GM12878 (cell line): ENCODE measurements at regions of chr6 and their contacts with region 1.

Region 1: DNA sequence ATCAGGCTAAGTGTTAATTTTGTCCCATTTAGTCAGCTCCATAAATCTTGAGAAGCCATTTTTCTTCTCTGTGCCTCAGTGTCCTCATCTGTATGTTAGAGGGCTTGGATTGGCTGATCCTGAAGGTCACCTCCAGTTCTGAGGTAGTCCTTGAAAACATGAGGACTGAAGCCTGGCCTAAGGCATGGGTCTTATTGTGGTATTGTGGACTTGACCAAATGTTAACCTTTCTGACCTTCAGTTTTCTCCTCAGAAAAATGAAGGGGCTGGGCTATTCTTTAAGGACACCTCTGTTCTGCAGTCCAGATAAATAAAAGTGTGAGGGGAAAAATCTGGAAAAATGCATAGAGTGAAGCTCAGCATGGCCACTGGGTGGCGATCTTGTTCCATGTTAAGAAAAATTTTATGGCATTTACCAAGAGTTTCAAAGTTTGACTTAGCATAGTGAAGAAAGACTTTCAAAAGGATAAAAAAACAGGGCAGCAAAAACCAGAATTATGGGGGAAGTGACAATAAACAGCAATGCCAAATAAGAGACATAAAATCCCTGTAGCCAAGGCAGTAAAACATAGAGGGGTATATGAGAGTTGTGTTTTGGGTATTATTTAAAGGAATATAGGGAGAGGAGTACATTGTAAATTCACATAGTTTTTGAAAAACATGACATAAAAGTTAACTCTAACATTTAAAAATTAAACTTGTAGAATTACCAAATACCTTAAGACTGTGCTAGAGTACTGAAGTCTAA is 13.2 kb upstream of the TFB1M start:
- DNase-seq: no peak
- ATAC-seq: peak; percentile 85
- H3K4me3 ChIP-seq: no peak overlapping the region
- H3K27ac ChIP-seq: no peak overlapping the region
- H3K4me1 ChIP-seq: no peaks in the 10 kb centered on the region; the same call in 1 of the 2 replicates
- H3K27me3 ChIP-seq: no peaks in the 10 kb centered on the region
- CTCF ChIP-seq: peak; percentile 64 to 84 (median 71)
- EP300 ChIP-seq: no peak
- POLR2A ChIP-seq: no peak
- RAD21 ChIP-seq: peak; percentile 98

Region 2: DNA sequence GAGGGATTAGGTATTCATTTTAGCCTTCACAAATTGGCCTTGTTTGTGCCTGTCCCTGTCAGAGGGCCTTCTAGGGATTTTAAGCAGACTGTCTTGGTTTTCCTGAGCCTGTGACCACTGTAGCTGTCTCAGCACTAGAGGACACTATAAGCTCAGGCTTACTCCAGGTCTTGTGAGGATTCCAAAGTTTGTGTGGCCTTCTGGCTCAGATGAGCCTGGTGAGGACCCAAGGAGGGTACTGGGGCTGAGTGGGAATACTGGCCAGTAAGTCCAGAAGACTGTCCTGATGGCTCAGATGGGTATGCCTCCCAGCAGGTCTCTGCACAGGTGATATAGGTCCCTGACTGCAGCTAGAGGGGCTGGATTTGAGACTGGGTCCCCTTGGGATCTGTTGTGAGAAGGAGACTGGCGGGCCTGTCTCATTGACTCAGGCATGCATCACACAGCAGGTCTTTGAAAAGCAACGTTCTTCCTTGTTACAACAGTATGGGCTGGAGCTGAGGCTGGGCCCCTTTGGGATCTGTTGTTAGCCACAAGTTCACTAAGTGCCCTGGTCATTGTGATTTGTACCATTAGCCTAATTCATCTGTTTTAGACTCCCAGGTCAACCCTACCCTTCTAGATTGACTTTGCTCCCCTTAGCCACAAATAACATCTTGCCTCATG is 13.1 kb after region 1 on chr6:
- CTCF ChIA-PET with region 1: interaction called, 10 read pairs
- POLR2A ChIA-PET with region 1: interaction called, 7 read pairs
- RAD21 ChIA-PET with region 1: interaction called, 3 read pairs
- SMC1A ChIA-PET with region 1: interaction called, 8 read pairs
- in situ Hi-C with region 1: no loop called
- intact Hi-C with region 1: no loop called
- DNase-seq: no peak
- ATAC-seq: peak; percentile 64
- H3K4me3 ChIP-seq: no peak overlapping the region
- H3K27ac ChIP-seq: peak overlapping the region; percentile 67
- H3K4me1 ChIP-seq: peaks cover 17% of the 10 kb centered on the region
- H3K27me3 ChIP-seq: no peaks in the 10 kb centered on the region
- CTCF ChIP-seq: peak in 2 of 3 experiments; percentile 14 to 26; a peak in 2 of 6 replicates
- EP300 ChIP-seq: no peak
- POLR2A ChIP-seq: no peak
- RAD21 ChIP-seq: peak; percentile 56

Region 3: DNA sequence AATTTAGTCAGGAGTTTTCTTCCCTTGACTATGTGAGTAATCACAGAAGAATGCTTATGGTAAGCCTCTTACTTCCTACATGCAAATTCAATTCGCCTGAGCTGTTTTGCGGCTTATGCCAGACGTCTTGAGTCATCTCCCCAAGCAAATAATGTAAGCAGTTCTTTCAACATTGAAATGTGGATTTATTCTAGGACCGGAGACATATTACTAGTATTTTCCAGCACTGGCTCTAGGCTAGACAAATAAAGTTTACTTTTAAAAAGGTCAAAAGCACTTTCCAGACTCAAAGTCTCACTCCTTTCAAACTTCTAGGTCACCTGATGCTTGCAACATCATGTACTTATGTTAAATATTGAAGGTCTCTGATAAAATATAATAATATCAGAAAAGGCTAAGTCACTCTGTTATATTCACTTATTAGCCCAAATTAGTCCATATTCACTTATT is 166.2 kb after region 1 on chr6:
- CTCF ChIA-PET with region 1: interaction called, 19 read pairs
- POLR2A ChIA-PET with region 1: no interaction called
- RAD21 ChIA-PET with region 1: interaction called, 31 read pairs
- SMC1A ChIA-PET with region 1: interaction called, 30 read pairs
- in situ Hi-C with region 1: no loop called
- intact Hi-C with region 1: no loop called
- DNase-seq: peak; percentile 56
- ATAC-seq: peak; percentile 96
- H3K4me3 ChIP-seq: no peak overlapping the region
- H3K27ac ChIP-seq: no peak overlapping the region
- H3K4me1 ChIP-seq: peaks cover 5% of the 10 kb centered on the region; the same call in 1 of the 2 replicates
- H3K27me3 ChIP-seq: no peaks in the 10 kb centered on the region
- CTCF ChIP-seq: no peak
- EP300 ChIP-seq: peak in 1 of 2 experiments; percentile 52; a peak in 2 of 4 replicates
- POLR2A ChIP-seq: no peak
- RAD21 ChIP-seq: no peak

Region 4: DNA sequence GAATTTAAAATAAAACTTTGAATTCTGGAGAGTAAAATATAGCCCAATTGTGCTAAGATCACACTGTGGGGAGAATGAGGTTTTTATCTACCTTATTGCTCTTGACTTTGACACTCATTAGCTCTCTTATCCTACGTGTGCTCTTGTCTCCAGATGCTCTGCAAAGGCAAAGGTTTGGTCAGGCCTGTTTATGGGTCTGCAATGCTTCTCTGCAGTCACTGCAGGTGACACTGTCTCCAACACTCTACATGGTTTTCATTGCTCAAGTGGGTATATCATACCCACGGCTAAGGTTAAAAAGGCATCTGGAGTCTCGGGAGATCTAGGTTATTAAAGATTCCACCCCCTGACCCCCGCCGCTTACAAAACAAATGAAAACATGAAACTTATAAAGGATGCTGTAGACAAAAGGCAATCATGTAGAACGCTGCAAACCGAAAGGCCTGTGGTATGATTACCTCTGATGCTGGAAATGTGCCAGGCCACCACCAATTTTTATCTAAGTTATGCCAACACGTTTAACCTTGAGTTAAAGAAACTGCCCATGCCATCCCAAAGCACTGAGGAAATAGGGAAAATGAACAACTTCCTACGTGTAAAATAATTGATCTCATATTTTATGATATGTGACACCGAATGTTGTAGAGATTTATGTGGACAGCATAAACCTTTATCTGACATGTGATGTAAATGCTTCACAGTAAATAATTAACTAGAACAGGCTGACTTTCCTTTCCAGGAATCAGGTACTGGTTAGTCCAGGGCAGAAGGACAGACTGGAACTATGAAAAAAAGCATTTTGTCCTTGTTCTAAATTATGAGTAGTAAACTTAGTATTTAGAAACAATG is 366.3 kb after region 1 on chr6:
- CTCF ChIA-PET with region 1: no interaction called
- POLR2A ChIA-PET with region 1: no interaction called
- RAD21 ChIA-PET with region 1: no interaction called
- SMC1A ChIA-PET with region 1: no interaction called
- in situ Hi-C with region 1: no loop called
- intact Hi-C with region 1: loop called (anchors 10 kb)
- DNase-seq: no peak
- ATAC-seq: no peak
- H3K4me3 ChIP-seq: no peak overlapping the region
- H3K27ac ChIP-seq: no peak overlapping the region
- H3K4me1 ChIP-seq: no peaks in the 10 kb centered on the region
- H3K27me3 ChIP-seq: no peaks in the 10 kb centered on the region
- CTCF ChIP-seq: no peak
- EP300 ChIP-seq: no peak
- POLR2A ChIP-seq: no peak
- RAD21 ChIP-seq: no peak

Region 5: GRCh38 chr6:155882527-155883333 is 555.2 kb after region 1 on chr6:
- CTCF ChIA-PET with region 1: no interaction called
- POLR2A ChIA-PET with region 1: no interaction called
- RAD21 ChIA-PET with region 1: no interaction called
- SMC1A ChIA-PET with region 1: no interaction called
- in situ Hi-C with region 1: loop called (anchors 10 kb)
- intact Hi-C with region 1: loop called (anchors 2 kb)
- DNase-seq: peak; percentile 21
- ATAC-seq: peak; percentile 86
- H3K4me3 ChIP-seq: no peak overlapping the region
- H3K27ac ChIP-seq: no peak overlapping the region
- H3K4me1 ChIP-seq: no peaks in the 10 kb centered on the region
- H3K27me3 ChIP-seq: no peaks in the 10 kb centered on the region
- CTCF ChIP-seq: no peak
- EP300 ChIP-seq: peak in 1 of 2 experiments; percentile 53; a peak in 2 of 4 replicates
- POLR2A ChIP-seq: no peak
- RAD21 ChIP-seq: no peak

Region 6: DNA sequence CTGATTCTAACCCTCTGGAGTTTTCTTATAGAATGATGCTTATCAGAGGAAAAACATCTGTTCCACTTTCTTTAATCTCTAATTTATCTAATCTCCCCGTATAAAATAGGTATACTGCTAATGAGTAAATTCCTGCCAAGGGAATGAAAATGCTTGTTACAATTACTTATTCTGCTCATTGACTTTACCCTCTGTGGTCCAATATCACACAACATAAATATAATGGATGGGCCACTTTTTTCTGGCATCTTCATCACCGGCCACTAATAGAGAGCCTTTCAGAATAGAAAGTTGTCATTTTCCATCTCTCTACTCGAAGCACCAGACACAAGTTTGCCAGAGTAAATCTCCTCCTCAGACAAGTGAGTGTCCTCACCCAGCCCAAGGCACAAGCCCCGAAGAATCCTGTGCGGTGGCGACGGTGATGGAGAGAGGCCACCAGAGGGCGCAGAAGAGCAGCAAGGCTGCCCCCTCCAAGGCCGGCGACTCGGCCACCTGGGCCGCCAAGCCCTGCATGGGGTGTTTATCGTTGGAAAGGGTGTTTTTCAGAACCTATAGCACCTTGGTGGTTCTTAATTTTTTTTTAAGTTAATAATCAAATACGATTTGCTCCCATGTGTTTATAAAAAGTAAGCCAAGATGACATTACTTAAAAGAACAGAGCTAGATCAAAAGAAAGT is 1236.8 kb after region 1 on chr6:
- CTCF ChIA-PET with region 1: interaction called, 5 read pairs
- POLR2A ChIA-PET with region 1: no interaction called
- RAD21 ChIA-PET with region 1: no interaction called
- SMC1A ChIA-PET with region 1: no interaction called
- in situ Hi-C with region 1: loop called (anchors 10 kb)
- intact Hi-C with region 1: loop called (anchors 5 kb)
- DNase-seq: peak; percentile 46
- ATAC-seq: peak; percentile 100
- H3K4me3 ChIP-seq: no peak overlapping the region
- H3K27ac ChIP-seq: no peak overlapping the region
- H3K4me1 ChIP-seq: no peaks in the 10 kb centered on the region
- H3K27me3 ChIP-seq: no peaks in the 10 kb centered on the region; a peak in 1 of 4 replicates
- CTCF ChIP-seq: peak; percentile 91 to 94 (median 93)
- EP300 ChIP-seq: no peak
- POLR2A ChIP-seq: no peak
- RAD21 ChIP-seq: peak; percentile 97